Activated T-helper 1 cell treated with anti-CD3 and anti-CD28 coated beads, Interleukin-12 subunit alpha, Interleukin-12 subunit beta, Interleukin-2, Interleukin-4 antibody, amounts not matched to agents 30 ng/mL and 10 ng/mL and 1 ng/mL, durations not matched to agents 14 hours and 24 hours and 36 hours (primary cell): ENCODE measurements at regions of chr15 and their contacts with region 1.

Region 1: DNA sequence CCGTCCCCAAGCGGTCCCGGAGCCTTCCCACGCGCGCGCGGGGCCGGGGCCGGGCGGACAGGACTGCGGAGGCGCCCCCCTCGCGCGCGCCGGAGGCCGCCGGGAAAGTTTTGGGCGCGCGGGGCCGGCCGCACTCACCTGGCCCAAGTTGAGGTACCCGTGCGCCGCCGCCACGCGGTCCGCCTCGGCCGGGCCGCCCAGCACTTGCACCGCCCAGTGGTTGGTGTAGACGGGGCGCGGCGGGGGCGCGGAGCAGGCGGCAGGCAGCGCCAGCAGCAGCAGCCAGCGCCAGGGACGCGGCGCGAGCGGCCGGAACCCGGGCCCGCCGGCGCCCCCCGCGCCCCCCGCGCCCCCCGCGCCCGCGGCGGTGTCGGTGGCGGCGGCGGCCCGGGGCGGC is 273 bp downstream of the PCSK6 start:
- DNase-seq: no peak
- H3K4me3 Mint-ChIP-seq: no peak overlapping the region
- H3K27ac Mint-ChIP-seq: no peak overlapping the region
- H3K4me1 Mint-ChIP-seq: peaks cover 1% of the 10 kb centered on the region
- H3K27me3 Mint-ChIP-seq: peaks cover 47% of the 10 kb centered on the region

Region 2: GRCh38 chr15:101439920-101440319 is 49.3 kb before region 1 on chr15:
- intact Hi-C with region 1: loop called (anchors 5 kb)
- DNase-seq: no peak
- H3K4me3 Mint-ChIP-seq: no peak overlapping the region
- H3K27ac Mint-ChIP-seq: no peak overlapping the region
- H3K4me1 Mint-ChIP-seq: no peaks in the 10 kb centered on the region
- H3K27me3 Mint-ChIP-seq: peaks cover 5% of the 10 kb centered on the region